Endothelial cell of umbilical vein (primary cell): ENCODE measurements at regions of chr7 and their contacts with region 1.

Region 1: DNA sequence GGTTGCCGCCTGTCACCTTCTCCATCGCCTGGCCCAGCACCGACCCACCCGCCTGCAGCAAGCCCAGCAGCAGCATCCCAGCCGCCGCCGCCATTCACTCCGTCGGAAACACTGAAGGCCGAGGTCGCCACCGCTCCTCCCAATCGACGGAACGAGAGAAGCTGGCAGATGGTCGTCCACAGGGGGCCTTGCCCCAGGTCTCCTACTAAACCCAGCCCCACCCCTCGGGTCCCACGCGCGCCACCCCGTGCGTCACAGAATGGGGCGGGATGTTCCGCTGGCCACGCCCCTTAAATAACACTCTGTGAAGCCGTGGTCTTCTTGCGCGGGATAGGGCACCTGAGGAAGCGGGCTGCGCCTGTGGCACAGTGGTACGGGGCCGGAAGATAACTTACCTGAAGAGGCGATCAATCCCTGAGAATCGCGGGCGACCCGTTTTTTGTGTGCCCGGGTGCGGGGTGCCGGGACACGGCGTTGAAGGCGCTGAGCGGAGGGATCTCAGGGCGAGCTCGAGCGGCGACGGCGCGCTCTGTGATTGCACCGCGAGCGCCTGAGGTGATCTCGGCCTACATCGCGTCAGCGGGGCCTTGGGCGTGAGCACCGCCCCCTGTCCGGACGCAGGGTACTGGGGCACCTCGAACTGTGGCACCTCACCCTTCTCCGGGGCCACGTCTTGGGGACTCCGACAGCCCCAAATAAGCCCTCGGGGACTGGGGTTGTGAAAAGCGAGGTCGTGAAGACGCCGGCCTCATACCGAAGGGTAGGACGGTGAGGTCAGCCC is at the start of gene CYP51A1:
- DNase-seq: peak; percentile 94
- H3K4me3 ChIP-seq: peak within 1 kb of the TSS; percentile 77 to 84 (median 81)
- H3K27ac ChIP-seq: peak within 1 kb of the TSS; percentile 95
- H3K4me1 ChIP-seq: peaks cover 18% of the 10 kb centered on the region
- H3K27me3 ChIP-seq: no peaks in the 10 kb centered on the region
- CTCF ChIP-seq: peak in 1 of 2 donors; percentile 23
- POLR2A ChIP-seq: peak; percentile 52
- total RNA-seq, gene CYP51A1: 119 and 131 TPM in 2 replicates

Region 2: GRCh38 chr7:92119213-92119759 is 15.2 kb before region 1 on chr7:
- CTCF ChIA-PET with region 1: interaction called, 16 read pairs
- POLR2A ChIA-PET with region 1: no interaction called
- dilution Hi-C with region 1: no loop called
- intact Hi-C with region 1: no loop called
- DNase-seq: no peak
- H3K4me3 ChIP-seq: no peak overlapping the region
- H3K27ac ChIP-seq: no peak overlapping the region
- H3K4me1 ChIP-seq: no peaks in the 10 kb centered on the region
- H3K27me3 ChIP-seq: no peaks in the 10 kb centered on the region
- CTCF ChIP-seq: no peak
- POLR2A ChIP-seq: no peak

Region 3: DNA sequence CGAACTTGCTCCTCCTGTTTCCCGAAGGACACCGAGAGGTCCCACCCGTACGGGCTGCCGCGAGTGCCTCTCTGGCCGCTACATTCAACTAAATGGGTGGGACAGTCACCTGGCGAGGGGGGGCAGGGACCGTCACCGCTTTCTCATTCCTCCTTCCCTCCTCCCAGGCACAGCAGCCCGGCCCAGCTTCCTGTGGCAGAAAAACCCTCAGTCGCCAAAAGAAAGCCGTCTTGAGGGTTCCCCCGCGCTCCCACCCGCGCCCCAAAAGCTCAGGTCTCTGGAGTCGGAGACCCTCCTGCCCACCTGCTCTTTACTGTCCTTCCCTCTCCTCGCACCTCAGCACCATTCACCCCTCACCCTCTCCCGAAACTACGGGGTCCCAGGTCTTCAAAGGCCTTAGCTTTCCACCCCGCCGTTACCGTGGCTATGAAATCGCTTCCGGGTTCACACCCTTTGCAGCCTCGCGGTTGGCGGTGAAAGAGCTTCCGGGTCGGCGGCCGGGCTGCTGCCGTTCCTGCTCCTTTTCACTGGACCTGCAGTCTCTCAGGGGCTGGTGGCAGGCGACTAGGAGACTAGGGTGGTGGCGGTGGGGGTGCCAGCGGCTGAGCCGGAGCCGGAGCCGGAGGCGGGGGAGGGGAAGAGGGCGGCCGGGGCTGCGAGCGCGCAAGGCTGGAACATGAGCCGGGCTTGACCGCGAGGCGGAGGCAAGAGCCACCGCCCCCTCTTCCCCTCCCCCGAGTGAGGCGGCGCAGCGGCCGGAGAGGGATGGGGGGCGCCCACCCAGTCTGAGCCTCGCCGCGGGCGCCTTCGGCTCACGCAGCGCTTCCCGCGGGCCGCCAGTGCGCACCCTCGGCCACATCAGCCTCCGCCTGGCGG is 111.3 kb after region 1 on chr7 and contains the starts of genes ANKIB1 and KRIT1:
- CTCF ChIA-PET with region 1: interaction called, 6 read pairs
- POLR2A ChIA-PET with region 1: no interaction called
- dilution Hi-C with region 1: no loop called
- intact Hi-C with region 1: loop called (anchors 10 kb)
- DNase-seq: peak; percentile 91
- H3K4me3 ChIP-seq: peak within 1 kb of the TSS; percentile 99
- H3K27ac ChIP-seq: peak within 1 kb of the TSS; percentile 63
- H3K4me1 ChIP-seq: peaks cover 22% of the 10 kb centered on the region
- H3K27me3 ChIP-seq: no peaks in the 10 kb centered on the region
- CTCF ChIP-seq: peak in 1 of 2 donors; percentile 26
- POLR2A ChIP-seq: no peak
- total RNA-seq, gene ANKIB1: 48.4 and 56.5 TPM in 2 replicates
- total RNA-seq, gene KRIT1: 32.9 and 43.7 TPM in 2 replicates